HepG2 (cell line): ENCODE measurements at regions of chr18 and their contacts with region 1.

Region 1: DNA sequence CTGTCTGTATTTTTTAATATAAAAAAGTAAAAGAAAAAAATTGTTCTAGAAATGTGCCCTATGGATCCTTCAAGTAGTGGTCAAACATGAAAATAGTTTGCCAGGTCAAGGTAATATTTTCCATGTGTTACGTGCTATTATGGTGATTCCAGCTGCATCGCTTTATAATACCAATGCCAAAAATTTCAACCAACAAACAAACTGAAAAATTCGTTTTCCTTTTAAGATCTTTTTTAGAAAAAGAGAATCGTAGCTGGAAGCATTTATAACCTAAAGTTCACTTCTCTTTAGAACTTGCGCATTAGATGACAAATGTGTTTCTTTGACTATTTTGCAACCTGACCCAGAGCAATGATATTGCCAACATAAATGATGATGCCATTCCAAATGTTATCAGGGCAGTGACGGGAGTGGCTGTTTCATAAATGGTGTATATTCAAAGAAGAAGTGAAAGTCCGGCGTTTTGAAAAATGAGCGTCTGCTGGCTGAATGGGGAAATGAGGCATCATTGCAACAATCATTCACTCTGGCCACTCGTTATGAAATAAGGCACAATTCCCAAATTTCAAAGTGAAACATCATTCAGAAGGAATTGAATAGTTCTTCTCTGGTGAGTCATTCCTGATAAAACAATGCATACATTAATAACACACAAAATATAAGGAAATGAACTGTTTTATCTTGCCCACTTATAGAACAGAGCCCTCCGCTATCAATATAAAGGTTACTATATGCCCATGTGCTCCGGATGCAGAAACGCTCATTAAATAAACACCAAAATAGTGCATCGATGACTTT is 297.4 kb downstream of the TGIF1 start:
- DNase-seq: no peak
- ATAC-seq: no peak
- H3K4me3 ChIP-seq: no peak overlapping the region
- H3K27ac ChIP-seq: no peak overlapping the region
- H3K4me1 ChIP-seq: no peaks in the 10 kb centered on the region
- H3K27me3 ChIP-seq: no peaks in the 10 kb centered on the region; a peak in 2 of 5 replicates
- CTCF ChIP-seq: no peak
- EP300 ChIP-seq: no peak
- POLR2A ChIP-seq: no peak
- RAD21 ChIP-seq: no peak

Region 2: DNA sequence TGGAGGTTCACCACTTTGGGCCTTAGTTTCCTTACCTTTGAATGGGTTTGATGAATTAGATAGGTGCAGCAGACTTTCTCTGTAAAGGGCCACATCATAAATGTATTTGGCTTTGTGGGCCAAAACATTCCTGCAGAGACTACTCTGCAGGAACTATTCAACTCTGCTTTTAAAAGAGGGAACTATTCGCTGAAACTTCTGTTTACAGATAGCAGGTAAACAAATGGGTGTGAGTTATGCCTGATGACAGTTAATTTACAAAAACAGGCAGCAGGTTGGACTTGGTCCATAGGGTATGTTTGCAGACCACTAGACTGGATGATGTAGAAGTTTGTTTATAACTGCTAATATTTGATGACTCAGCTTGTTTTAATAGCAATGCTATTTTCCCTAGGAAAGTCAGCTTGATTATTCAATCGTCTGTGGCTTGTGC is 24.4 kb before region 1 on chr18:
- CTCF ChIA-PET with region 1: no interaction called
- POLR2A ChIA-PET with region 1: no interaction called
- in situ Hi-C with region 1: no loop called
- intact Hi-C with region 1: loop called (anchors 1 kb)
- DNase-seq: peak; percentile 72
- ATAC-seq: peak; percentile 90
- H3K4me3 ChIP-seq: peak overlapping the region in 2 of 3 experiments; percentile 11 to 25; a peak in 1 of 6 replicates
- H3K27ac ChIP-seq: peak overlapping the region; percentile 32
- H3K4me1 ChIP-seq: peaks cover 51% of the 10 kb centered on the region
- H3K27me3 ChIP-seq: peaks cover 0 to 9% of the 10 kb centered on the region in 2 experiments; a peak in 2 of 5 replicates
- CTCF ChIP-seq: no peak
- EP300 ChIP-seq: peak in 1 of 2 experiments; percentile 65; a peak in 2 of 4 replicates
- POLR2A ChIP-seq: no peak
- RAD21 ChIP-seq: no peak

Region 3: DNA sequence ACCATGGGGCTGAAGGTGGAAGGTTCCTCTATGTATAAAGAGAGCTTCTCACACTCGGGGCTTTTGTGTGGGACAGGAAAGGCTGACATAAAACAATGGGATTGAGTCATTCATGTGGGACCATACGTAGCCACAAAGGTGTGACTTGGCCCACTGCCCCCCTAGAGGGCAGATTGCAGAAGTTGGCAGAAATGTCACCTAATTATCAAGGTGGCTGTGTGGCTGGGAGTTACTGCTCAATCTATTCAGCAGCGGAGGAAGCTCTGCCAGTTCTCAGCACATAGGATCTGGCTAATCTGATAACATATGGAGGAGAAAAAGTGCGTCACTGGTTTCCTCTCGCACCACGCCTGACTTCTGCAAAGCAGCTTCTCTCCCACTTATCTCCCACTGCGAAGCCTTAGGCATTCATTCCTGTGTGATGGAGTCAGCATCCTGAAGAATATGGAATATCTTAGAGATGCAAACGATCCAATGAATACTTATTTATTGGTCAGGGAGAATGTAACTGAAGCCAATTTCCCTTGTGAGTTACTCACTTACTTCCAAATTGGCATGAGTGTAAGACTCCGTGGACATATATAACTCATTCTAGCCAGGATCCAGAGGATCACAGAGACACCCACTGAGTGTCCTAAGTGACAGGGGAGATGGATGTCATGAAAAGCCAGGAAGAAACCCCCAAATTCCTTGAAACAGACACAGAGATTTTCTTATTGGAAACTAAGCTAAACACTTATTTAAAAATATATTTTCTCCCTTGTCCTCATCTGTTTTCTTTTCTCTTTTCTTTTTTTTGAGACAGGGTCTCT is 47.4 kb after region 1 on chr18:
- CTCF ChIA-PET with region 1: no interaction called
- POLR2A ChIA-PET with region 1: no interaction called
- in situ Hi-C with region 1: no loop called
- intact Hi-C with region 1: no loop called
- DNase-seq: no peak
- ATAC-seq: no peak
- H3K4me3 ChIP-seq: no peak overlapping the region
- H3K27ac ChIP-seq: no peak overlapping the region
- H3K4me1 ChIP-seq: no peaks in the 10 kb centered on the region
- H3K27me3 ChIP-seq: no peaks in the 10 kb centered on the region; a peak in 1 of 5 replicates
- CTCF ChIP-seq: no peak
- EP300 ChIP-seq: no peak
- POLR2A ChIP-seq: no peak
- RAD21 ChIP-seq: no peak

Region 4: GRCh38 chr18:3985664-3986063 is 238.3 kb after region 1 on chr18:
- CTCF ChIA-PET with region 1: no interaction called
- POLR2A ChIA-PET with region 1: no interaction called
- in situ Hi-C with region 1: no loop called
- intact Hi-C with region 1: no loop called
- DNase-seq: no peak
- ATAC-seq: no peak
- H3K4me3 ChIP-seq: no peak overlapping the region
- H3K27ac ChIP-seq: no peak overlapping the region
- H3K4me1 ChIP-seq: no peaks in the 10 kb centered on the region
- H3K27me3 ChIP-seq: peaks cover 2 to 9% of the 10 kb centered on the region in 2 experiments; a peak in 2 of 5 replicates
- CTCF ChIP-seq: no peak
- EP300 ChIP-seq: no peak
- POLR2A ChIP-seq: no peak
- RAD21 ChIP-seq: no peak